CD8-positive, alpha-beta T cell (primary cell): ENCODE measurements at regions of chr10 and their contacts with region 1.

Region 1: GRCh38 chr10:17430647-17431355 is 23.6 kb downstream of the ST8SIA6 start:
- DNase-seq: peak in 8 of 9 experiments; percentile 42 to 80 (median 72)
- ATAC-seq: no peak
- H3K4me3 ChIP-seq: no peak overlapping the region
- H3K4me3 Mint-ChIP-seq: no peak overlapping the region
- H3K27ac ChIP-seq: no peak overlapping the region
- H3K27ac Mint-ChIP-seq: no peak overlapping the region
- H3K4me1 ChIP-seq: peaks cover 49% of the 10 kb centered on the region
- H3K4me1 Mint-ChIP-seq: peaks cover 50% of the 10 kb centered on the region
- H3K27me3 ChIP-seq: no peaks in the 10 kb centered on the region
- H3K27me3 Mint-ChIP-seq: peaks cover 2% of the 10 kb centered on the region
- CTCF ChIP-seq: peak; percentile 95

Region 2: GRCh38 chr10:16828114-16828568 is 602.7 kb before region 1 on chr10:
- CTCF ChIA-PET with region 1: interaction called, 5 read pairs
- POLR2A ChIA-PET with region 1: no interaction called
- intact Hi-C with region 1: loop called (anchors 5 kb)
- DNase-seq: peak in 8 of 9 experiments; percentile 47 to 87 (median 63)
- ATAC-seq: peak; percentile 96
- H3K4me3 ChIP-seq: no peak overlapping the region
- H3K4me3 Mint-ChIP-seq: no peak overlapping the region
- H3K27ac ChIP-seq: no peak overlapping the region
- H3K27ac Mint-ChIP-seq: peak overlapping the region; percentile 45
- H3K4me1 ChIP-seq: no peaks in the 10 kb centered on the region
- H3K4me1 Mint-ChIP-seq: peaks cover 4% of the 10 kb centered on the region
- H3K27me3 ChIP-seq: no peaks in the 10 kb centered on the region
- H3K27me3 Mint-ChIP-seq: no peaks in the 10 kb centered on the region
- CTCF ChIP-seq: peak; percentile 69

Region 3: GRCh38 chr10:17029581-17030271 is 401.1 kb before region 1 on chr10:
- CTCF ChIA-PET with region 1: no interaction called
- POLR2A ChIA-PET with region 1: no interaction called
- intact Hi-C with region 1: loop called in 1 of 2 experiments (anchors 5 kb)
- DNase-seq: peak; percentile 45 to 91 (median 74)
- ATAC-seq: peak; percentile 48
- H3K4me3 ChIP-seq: peak overlapping the region; percentile 47 to 58
- H3K4me3 Mint-ChIP-seq: peak overlapping the region; percentile 79
- H3K27ac ChIP-seq: peak overlapping the region; percentile 63 to 88
- H3K27ac Mint-ChIP-seq: peak overlapping the region; percentile 96
- H3K4me1 ChIP-seq: peaks cover 76% of the 10 kb centered on the region
- H3K4me1 Mint-ChIP-seq: peaks cover 89% of the 10 kb centered on the region
- H3K27me3 ChIP-seq: no peaks in the 10 kb centered on the region
- H3K27me3 Mint-ChIP-seq: no peaks in the 10 kb centered on the region
- CTCF ChIP-seq: no peak

Region 4: DNA sequence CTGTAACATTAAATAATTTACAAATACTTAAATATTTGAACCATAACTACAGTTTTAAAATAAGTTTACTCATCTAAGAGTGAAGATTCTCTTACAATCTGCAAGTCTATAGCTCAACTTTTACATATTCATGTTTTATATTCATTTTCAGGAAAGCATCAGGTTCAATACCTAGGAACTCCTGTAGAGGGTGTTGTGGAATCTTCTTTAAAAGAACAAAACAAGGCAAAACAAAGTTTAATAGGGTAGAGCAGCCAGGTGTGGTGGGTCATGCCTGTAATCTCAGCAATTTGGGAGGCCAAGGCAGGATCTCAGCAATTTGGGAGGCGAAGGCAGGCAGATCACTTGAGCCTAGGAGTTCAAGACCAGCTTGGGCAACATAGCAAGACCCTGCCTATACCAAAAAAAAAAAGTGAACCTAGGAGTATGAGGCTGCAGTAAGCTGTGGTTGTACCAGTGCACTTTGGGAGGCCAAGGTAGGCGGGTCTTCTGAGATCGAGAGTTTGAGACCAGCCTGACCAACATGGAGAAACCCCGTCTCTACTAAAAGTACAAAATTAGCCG is 21.5 kb before region 1 on chr10:
- CTCF ChIA-PET with region 1: interaction called, 293 read pairs
- POLR2A ChIA-PET with region 1: interaction called, 16 read pairs
- intact Hi-C with region 1: loop called (anchors 1 kb)
- DNase-seq: peak in 3 of 9 experiments; percentile 49 to 64 (median 56)
- ATAC-seq: peak; percentile 73
- H3K4me3 ChIP-seq: no peak overlapping the region
- H3K4me3 Mint-ChIP-seq: no peak overlapping the region
- H3K27ac ChIP-seq: no peak overlapping the region
- H3K27ac Mint-ChIP-seq: peak overlapping the region; percentile 53
- H3K4me1 ChIP-seq: peaks cover 15% of the 10 kb centered on the region
- H3K4me1 Mint-ChIP-seq: peaks cover 13% of the 10 kb centered on the region
- H3K27me3 ChIP-seq: no peaks in the 10 kb centered on the region
- H3K27me3 Mint-ChIP-seq: no peaks in the 10 kb centered on the region
- CTCF ChIP-seq: peak; percentile 69